ENCODE measurements at regions of chr1 and their contacts with region 1.

Region 1: GRCh38 chr1:108746372-108747205 is at the start of gene STXBP3:
- DNase-seq: peak; percentile 97 to 99 (median 99)
- H3K4me3 ChIP-seq: peak within 1 kb of the TSS; percentile 79 to 99 (median 85)
- H3K4me3 Mint-ChIP-seq: peak within 1 kb of the TSS; percentile 91 to 99
- H3K27ac ChIP-seq: peak within 1 kb of the TSS; percentile 97 to 100
- H3K27ac Mint-ChIP-seq: peak within 1 kb of the TSS; percentile 99 to 100 (median 99)
- H3K4me1 ChIP-seq: peaks cover 12 to 20% of the 10 kb centered on the region in 2 donors
- H3K4me1 Mint-ChIP-seq: peaks cover 33% of the 10 kb centered on the region
- H3K27me3 ChIP-seq: no peaks in the 10 kb centered on the region
- H3K27me3 Mint-ChIP-seq: no peaks in the 10 kb centered on the region
- CTCF ChIP-seq: peak; percentile 94
- polyA plus RNA-seq, gene STXBP3: 32.3 to 56.2 (median 48.3) TPM

Region 2: DNA sequence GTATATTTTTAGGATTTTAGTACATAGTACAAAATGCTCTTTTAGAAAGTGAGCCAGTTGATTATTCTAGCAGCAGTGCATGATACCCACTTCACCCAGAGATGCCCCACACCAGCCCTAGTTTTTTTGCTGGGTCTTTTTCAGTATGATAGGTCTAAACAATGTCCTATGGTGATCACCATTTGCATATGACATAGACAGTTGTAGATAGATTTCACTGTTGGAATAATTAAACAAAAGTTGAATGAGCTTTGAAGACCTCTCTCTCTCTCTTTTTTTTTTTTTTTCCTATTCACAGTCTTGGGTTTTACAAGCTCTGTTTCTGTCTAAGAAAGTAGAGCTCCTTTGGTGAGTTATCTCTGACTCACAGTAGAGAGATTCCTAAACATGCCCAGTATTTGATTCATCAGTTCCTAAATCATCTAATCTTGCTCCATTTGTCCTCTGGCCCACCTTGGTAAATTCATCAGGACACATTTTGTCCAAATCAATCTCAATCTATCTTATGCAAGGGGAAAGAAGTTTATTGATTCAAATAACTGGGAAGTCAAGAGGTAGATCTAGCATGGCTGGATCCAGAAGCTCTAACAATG is 736.9 kb before region 1 on chr1:
- intact Hi-C with region 1: no loop called
- DNase-seq: no peak
- H3K4me3 ChIP-seq: no peak overlapping the region
- H3K4me3 Mint-ChIP-seq: no peak overlapping the region
- H3K27ac ChIP-seq: no peak overlapping the region
- H3K27ac Mint-ChIP-seq: no peak overlapping the region
- H3K4me1 ChIP-seq: no peaks in the 10 kb centered on the region
- H3K4me1 Mint-ChIP-seq: peaks cover 1% of the 10 kb centered on the region
- H3K27me3 ChIP-seq: no peaks in the 10 kb centered on the region
- H3K27me3 Mint-ChIP-seq: peaks cover 0 to 3% (median 1%) of the 10 kb centered on the region in 3 donors
- CTCF ChIP-seq: no peak

Region 3: GRCh38 chr1:108643492-108644335 is 102.9 kb before region 1 on chr1:
- intact Hi-C with region 1: loop called in 1 of 2 experiments (anchors 5 kb)
- DNase-seq: peak; percentile 33 to 56 (median 52)
- H3K4me3 ChIP-seq: no peak overlapping the region
- H3K4me3 Mint-ChIP-seq: no peak overlapping the region
- H3K27ac ChIP-seq: no peak overlapping the region
- H3K27ac Mint-ChIP-seq: peak overlapping the region in 1 of 7 donors; percentile 20
- H3K4me1 ChIP-seq: peaks cover 32 to 36% of the 10 kb centered on the region in 2 donors
- H3K4me1 Mint-ChIP-seq: peaks cover 51% of the 10 kb centered on the region
- H3K27me3 ChIP-seq: no peaks in the 10 kb centered on the region
- H3K27me3 Mint-ChIP-seq: peaks cover 0 to 2% (median 1%) of the 10 kb centered on the region in 3 donors
- CTCF ChIP-seq: peak; percentile 68

Region 4: DNA sequence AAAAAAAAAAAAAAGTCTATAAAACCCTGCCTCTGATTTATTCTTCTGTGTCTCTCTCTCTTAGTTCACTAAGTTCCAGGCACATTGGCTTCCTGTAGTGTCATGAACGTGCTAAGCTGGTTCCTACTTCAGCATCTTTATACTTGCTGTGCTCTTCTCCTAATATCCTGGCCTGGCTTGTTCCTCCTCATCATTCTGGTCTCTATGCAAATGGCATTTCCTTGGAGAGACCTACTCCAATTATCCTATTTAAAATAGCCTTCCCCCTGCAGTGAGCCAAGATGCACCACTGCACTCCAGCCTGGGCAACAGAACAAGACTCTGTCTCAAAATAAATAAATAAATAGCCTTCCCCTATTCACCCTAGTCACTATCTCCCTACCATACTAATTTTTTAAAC is 226.4 kb after region 1 on chr1:
- intact Hi-C with region 1: no loop called
- DNase-seq: no peak
- H3K4me3 ChIP-seq: no peak overlapping the region
- H3K4me3 Mint-ChIP-seq: no peak overlapping the region
- H3K27ac ChIP-seq: no peak overlapping the region
- H3K27ac Mint-ChIP-seq: peak overlapping the region in 2 of 7 donors; percentile 20 to 63
- H3K4me1 ChIP-seq: no peaks in the 10 kb centered on the region
- H3K4me1 Mint-ChIP-seq: no peaks in the 10 kb centered on the region
- H3K27me3 ChIP-seq: no peaks in the 10 kb centered on the region
- H3K27me3 Mint-ChIP-seq: no peaks in the 10 kb centered on the region
- CTCF ChIP-seq: no peak

Region 5: DNA sequence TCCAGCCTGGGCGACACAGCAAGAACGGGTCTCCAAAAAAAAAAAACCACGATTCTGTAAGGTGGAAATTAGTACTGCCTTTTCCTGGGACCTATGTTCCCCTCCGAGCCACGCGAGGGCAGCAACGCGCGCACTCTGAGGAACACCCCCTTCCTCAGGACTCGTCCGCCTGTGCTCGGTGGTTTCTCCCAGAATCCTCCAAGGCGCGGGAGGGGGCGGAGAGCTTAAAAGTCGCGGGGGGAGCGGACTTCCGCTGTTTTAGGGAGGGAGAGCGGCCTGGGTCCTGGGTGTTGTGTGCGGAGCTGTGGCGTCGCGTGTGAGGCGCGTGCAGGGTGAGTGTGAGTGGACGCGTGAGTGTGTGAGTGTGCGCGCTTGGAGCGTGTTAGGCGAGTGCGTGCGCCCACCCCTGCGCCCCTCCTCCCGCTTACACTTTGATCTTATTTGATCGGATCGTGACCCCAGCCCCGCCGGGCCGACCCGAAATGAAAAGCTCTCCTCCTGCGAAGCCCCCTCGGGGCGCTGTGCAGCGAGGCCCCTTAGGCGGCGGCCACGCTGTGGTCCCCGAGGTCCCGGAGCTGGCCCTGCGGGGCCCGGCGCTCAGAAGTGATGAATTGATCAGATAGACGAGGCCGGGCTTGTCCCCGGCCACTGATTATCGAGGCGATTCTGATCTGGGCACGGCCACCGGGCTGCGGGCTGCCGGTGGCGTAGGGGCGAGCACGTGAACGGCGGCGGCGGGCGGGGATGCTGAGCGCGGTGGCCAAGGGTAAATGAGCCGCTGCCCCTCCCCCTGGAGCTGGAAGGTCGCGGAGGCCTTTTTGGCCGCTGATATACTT is 353.6 kb after region 1 on chr1:
- intact Hi-C with region 1: loop called in 1 of 2 experiments (anchors 5 kb)
- DNase-seq: peak; percentile 93 to 97 (median 95)
- H3K4me3 ChIP-seq: peak overlapping the region; percentile 64 to 88 (median 86)
- H3K4me3 Mint-ChIP-seq: peak overlapping the region; percentile 98 to 99
- H3K27ac ChIP-seq: peak overlapping the region; percentile 85 to 90
- H3K27ac Mint-ChIP-seq: peak overlapping the region; percentile 92 to 98 (median 96)
- H3K4me1 ChIP-seq: peaks cover 19 to 29% of the 10 kb centered on the region in 2 donors
- H3K4me1 Mint-ChIP-seq: peaks cover 21% of the 10 kb centered on the region
- H3K27me3 ChIP-seq: no peaks in the 10 kb centered on the region
- H3K27me3 Mint-ChIP-seq: peaks cover 0 to 3% (median 0%) of the 10 kb centered on the region in 3 donors
- CTCF ChIP-seq: peak; percentile 80

Measured in CD14-positive monocyte (primary cell).